ENCODE measurements at regions of chr9 and their contacts with region 1.

Region 1: GRCh38 chr9:118961857-118962256 is 407.4 kb downstream of the BRINP1 start:
- DNase-seq: no peak
- ATAC-seq: peak; percentile 81

Region 2: DNA sequence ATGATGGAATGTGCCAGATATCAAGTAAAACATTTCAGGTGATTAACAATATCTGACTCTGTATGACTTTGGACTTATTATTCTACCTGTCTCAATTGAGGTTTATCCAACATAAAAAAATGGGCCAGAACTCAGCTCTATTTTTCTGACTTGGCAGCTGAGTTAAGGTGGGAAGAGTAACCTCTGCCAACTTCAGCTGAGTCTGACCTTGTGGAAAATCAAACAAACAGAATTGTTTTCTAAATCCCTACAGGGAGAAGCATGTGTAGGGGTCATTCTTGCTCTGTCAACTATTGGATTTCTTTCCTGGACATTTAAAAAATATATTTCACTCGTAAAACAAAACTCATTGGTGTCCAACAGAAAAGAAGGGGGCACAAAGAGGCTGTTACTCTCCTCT is 1397.0 kb before region 1 on chr9:
- intact Hi-C with region 1: no loop called
- DNase-seq: no peak
- ATAC-seq: no peak

Region 3: DNA sequence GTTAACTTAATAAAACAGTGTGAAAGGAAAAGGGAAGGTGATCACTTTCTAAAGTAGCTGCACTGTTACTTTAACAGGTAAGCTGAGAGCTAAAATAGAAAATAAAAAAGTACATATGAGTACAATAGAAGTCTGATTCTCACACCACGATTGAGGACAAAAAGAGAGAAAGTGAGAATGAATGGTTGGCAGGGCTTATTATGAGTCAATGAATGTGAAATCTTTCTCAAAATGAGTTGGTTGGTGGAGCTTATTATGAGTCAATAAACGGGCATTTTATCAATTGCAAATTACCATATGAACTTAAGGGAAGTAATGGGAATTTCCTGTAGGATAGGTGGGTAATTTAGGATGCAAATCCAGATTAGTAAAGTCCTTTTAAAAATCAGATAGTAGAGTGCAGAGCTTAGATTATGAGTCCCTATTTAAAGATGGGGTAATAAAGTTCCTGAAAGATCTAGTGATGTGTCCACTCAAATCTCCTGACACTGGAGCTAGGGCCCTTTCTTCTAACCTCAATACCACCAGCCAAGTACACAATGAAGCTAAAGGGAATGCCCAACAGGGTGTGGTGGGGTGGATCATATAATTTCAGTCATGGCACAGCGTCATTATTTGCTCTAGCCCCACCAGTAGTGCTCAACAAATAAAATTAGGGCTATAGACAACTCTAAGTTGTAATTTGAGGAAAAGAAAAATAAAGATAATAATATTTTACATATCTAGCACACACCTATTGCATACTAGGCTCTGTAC is 1278.7 kb before region 1 on chr9:
- intact Hi-C with region 1: no loop called
- DNase-seq: no peak
- ATAC-seq: no peak

Region 4: DNA sequence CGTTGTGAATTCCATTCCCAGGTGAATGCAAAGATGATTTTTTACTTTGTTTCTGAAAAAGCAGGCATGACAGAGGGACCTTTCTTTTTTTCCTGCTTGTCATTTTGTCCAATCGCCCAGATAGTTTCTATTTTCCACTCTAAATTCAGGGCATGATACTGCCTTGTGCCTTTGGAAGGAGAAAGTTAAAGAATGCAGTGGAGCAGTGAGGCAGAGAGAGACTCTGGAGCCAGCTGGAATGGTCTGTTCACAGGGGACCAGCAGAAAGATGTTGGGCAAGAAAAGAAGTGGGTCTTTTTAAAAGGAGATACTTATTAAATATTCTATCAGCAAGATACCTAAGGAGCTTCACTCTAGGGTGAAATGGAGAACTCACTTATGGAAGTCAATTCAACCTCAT is 125.0 kb before region 1 on chr9:
- intact Hi-C with region 1: loop called (anchors 10 kb)
- DNase-seq: no peak
- ATAC-seq: no peak

Region 5: GRCh38 chr9:118871531-118871930 is 90.3 kb before region 1 on chr9:
- intact Hi-C with region 1: no loop called
- DNase-seq: no peak
- ATAC-seq: no peak

Region 6: GRCh38 chr9:119556129-119556875 is 594.4 kb after region 1 on chr9:
- intact Hi-C with region 1: no loop called
- DNase-seq: peak; percentile 82
- ATAC-seq: peak; percentile 93

Measured in Right ventricle myocardium inferior (tissue), 1 donor.